Panc1 (cell line): ENCODE measurements at regions of chr17 and their contacts with region 1.

Region 1: DNA sequence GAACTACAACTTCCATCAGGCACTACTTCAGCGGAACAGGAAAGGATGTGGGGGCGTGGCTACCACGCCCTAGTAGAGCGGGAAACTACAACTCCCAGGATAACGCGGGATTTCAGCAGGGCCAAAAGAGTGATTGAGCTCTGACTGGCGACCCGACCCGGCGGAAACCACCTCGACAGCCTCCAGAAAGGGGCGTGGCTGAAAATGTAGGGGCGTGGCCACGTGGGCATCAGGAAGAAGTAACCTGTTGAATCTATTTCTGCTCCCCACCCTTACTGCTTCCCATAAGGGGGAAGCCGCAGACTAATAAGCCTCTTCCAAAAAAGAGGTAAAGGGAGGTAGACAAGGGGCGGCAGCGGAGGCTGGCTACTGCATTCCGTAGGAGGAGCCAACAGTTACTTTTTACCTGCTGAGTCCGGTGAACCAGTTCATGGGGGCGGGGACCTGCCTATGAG is at the start of gene TMEM102:
- DNase-seq: peak; percentile 99
- ATAC-seq: peak; percentile 82
- H3K4me3 ChIP-seq: peak within 1 kb of the TSS; percentile 64 to 80
- H3K27ac ChIP-seq: peak within 1 kb of the TSS; percentile 77
- H3K4me1 ChIP-seq: peaks cover 4% of the 10 kb centered on the region
- H3K27me3 ChIP-seq: no peaks in the 10 kb centered on the region
- CTCF ChIP-seq: no peak
- total RNA-seq, gene TMEM102: 8.5 TPM

Region 2: GRCh38 chr17:7367083-7367482 is 68.2 kb before region 1 on chr17:
- CTCF ChIA-PET with region 1: no interaction called
- POLR2A ChIA-PET with region 1: no interaction called
- in situ Hi-C with region 1: no loop called
- intact Hi-C with region 1: no loop called
- DNase-seq: no peak
- ATAC-seq: no peak
- H3K4me3 ChIP-seq: no peak overlapping the region
- H3K27ac ChIP-seq: no peak overlapping the region
- H3K4me1 ChIP-seq: no peaks in the 10 kb centered on the region
- H3K27me3 ChIP-seq: no peaks in the 10 kb centered on the region
- CTCF ChIP-seq: no peak

Region 3: DNA sequence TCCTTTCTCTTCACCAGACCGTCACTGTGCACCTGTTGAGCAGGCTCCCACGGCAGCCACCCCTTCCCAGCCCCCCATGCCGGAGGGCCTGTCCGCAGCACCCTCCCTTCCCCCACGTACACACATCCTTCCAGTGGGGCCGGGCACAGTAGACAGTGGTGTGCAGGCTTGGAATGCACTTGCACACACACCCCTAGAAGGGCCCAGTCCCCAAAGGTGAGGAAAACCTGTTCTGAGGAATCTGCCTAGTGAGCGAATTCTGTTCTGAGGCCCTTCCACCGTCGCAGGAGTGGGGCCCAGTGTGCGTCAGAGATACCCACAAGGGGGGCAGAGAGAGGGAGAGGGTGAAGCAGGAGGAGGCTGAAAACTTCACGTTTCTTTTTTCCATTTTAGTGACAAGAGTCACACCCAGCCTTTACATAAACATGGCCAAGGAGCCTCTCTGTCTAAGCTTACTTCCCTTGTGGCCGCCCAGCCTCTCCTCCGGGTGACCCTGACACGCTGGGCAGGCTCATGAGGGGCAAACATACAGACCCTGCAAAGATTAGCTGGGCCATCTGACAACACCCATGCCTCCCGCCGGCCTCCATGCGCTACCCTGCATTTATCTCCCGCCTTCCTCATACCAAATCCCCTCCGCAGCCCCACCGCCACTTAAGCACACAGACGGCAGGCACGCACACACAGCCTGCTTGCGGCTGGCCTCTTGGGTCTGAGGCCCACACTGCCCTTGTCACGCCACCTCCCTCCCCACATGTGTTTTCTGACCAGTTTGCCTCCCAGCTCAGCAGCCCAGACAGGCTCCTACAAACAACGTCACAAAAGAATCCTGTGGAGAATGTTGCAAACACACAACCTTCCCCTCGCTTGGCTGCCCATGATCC is 42.4 kb after region 1 on chr17:
- CTCF ChIA-PET with region 1: no interaction called
- POLR2A ChIA-PET with region 1: interaction called, 18 read pairs
- in situ Hi-C with region 1: no loop called
- intact Hi-C with region 1: no loop called
- DNase-seq: no peak
- ATAC-seq: peak; percentile 36
- H3K4me3 ChIP-seq: peak overlapping the region; percentile 61 to 66
- H3K27ac ChIP-seq: peak overlapping the region; percentile 61; the same call in 1 of the 2 replicates
- H3K4me1 ChIP-seq: peaks cover 26% of the 10 kb centered on the region
- H3K27me3 ChIP-seq: no peaks in the 10 kb centered on the region
- CTCF ChIP-seq: no peak

Region 4: DNA sequence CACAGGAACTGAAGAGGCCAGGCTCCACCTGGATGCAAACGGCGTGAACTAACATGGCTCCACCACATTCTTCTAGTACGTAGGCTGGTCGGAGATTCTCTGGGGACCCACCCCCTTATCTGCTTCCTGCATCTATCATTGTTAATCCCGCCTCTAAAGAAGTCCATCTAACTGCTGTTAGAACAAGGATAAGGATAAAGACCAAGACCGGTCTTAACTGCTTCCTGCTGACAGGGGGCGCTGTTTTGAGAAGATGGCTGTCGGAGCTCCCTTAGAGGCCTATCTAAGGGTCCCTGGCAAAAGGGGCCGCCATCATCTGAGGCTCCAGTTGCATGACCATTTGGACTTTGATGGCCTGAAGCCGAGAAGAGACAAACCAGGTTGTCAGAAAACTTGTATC is 87.8 kb after region 1 on chr17:
- CTCF ChIA-PET with region 1: interaction called, 13 read pairs
- POLR2A ChIA-PET with region 1: no interaction called
- in situ Hi-C with region 1: no loop called
- intact Hi-C with region 1: no loop called
- DNase-seq: no peak
- ATAC-seq: no peak
- H3K4me3 ChIP-seq: no peak overlapping the region
- H3K27ac ChIP-seq: no peak overlapping the region
- H3K4me1 ChIP-seq: no peaks in the 10 kb centered on the region
- H3K27me3 ChIP-seq: no peaks in the 10 kb centered on the region
- CTCF ChIP-seq: peak; percentile 73